ENCODE measurements at regions of chr15 and their contacts with region 1.

Region 1: DNA sequence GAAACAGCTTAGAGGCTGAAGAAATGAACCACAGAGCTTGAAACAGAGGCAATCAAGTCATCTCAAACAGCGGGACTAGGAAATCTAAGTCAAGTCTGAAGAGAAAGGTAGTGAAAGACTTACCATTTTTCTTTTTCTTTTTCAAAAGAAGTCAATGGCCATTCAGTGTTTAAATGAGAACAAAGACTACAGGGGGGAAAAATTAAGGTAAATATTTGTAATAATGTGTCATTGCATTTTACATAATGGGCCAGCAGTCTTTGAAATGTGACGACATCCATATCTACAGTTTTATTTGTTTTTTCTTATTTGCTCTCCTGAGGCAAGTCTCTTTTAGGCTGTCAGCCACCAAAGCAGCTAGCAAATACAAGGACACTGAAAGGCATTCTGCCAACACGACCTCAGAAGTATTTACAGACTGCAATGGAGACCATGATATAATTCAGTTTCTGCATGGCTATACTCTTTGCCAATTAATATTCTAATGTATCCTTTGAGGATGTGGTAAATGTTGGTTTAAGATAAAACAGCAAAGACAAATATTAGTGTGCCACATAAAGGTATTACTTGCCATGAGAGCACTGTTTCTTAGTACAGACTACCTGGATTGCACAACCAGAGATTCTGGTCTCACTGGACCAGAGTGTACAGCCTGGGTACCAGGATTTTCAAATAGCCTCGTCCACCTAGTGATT is 307.0 kb upstream of the THBS1 start:
- DNase-seq: no peak
- ATAC-seq: no peak
- H3K4me3 ChIP-seq: no peak overlapping the region
- H3K4me3 Mint-ChIP-seq: no peak overlapping the region
- H3K27ac ChIP-seq: no peak overlapping the region
- H3K27ac Mint-ChIP-seq: no peak overlapping the region
- H3K4me1 ChIP-seq: no peaks in the 10 kb centered on the region
- H3K4me1 Mint-ChIP-seq: no peaks in the 10 kb centered on the region
- H3K27me3 ChIP-seq: no peaks in the 10 kb centered on the region
- H3K27me3 Mint-ChIP-seq: peaks cover 4 to 17% (median 8%) of the 10 kb centered on the region in 5 donors

Region 2: GRCh38 chr15:39213385-39213840 is 60.5 kb before region 1 on chr15:
- CTCF ChIA-PET with region 1: no interaction called
- POLR2A ChIA-PET with region 1: no interaction called
- intact Hi-C with region 1: loop called in 1 of 2 experiments (anchors 10 kb)
- DNase-seq: no peak
- ATAC-seq: peak; percentile 27
- H3K4me3 ChIP-seq: no peak overlapping the region
- H3K4me3 Mint-ChIP-seq: no peak overlapping the region
- H3K27ac ChIP-seq: no peak overlapping the region
- H3K27ac Mint-ChIP-seq: no peak overlapping the region
- H3K4me1 ChIP-seq: no peaks in the 10 kb centered on the region
- H3K4me1 Mint-ChIP-seq: no peaks in the 10 kb centered on the region
- H3K27me3 ChIP-seq: no peaks in the 10 kb centered on the region
- H3K27me3 Mint-ChIP-seq: peaks cover 21 to 53% (median 37%) of the 10 kb centered on the region in 5 donors

Region 3: DNA sequence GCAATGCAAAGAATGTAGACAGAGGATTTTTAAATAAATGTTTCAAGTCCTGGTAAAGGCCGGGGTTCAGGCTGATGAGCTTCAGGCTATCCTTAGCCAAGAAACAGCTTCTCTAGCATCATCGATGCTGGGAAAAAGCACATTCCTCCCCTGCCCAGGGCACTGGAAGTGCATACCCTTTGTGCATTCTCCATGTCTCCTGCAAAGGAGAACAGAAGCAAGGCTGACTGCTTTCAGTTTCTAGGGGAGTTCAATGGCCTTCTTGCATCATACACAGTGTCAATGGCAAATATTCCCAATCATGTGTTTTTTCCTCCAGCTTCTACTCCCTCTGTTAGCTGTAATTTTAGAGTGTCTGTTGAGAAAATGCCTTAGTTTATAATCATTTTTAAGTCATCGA is 586.3 kb after region 1 on chr15:
- CTCF ChIA-PET with region 1: no interaction called
- POLR2A ChIA-PET with region 1: no interaction called
- intact Hi-C with region 1: no loop called
- DNase-seq: no peak
- ATAC-seq: no peak
- H3K4me3 ChIP-seq: no peak overlapping the region
- H3K4me3 Mint-ChIP-seq: no peak overlapping the region
- H3K27ac ChIP-seq: no peak overlapping the region
- H3K27ac Mint-ChIP-seq: no peak overlapping the region
- H3K4me1 ChIP-seq: no peaks in the 10 kb centered on the region
- H3K4me1 Mint-ChIP-seq: no peaks in the 10 kb centered on the region
- H3K27me3 ChIP-seq: no peaks in the 10 kb centered on the region
- H3K27me3 Mint-ChIP-seq: peaks cover 0 to 26% (median 15%) of the 10 kb centered on the region in 5 donors

Measured in naive thymus-derived CD4-positive, alpha-beta T cell (primary cell).